ENCODE measurements at regions of chr10 and their contacts with region 1.

Region 1: GRCh38 chr10:75235375-75236177 is at the start of gene COMTD1:
- DNase-seq: peak; percentile 93
- H3K4me3 ChIP-seq: peak within 1 kb of the TSS; percentile 71
- H3K27ac ChIP-seq: no peak within 1 kb of the TSS
- H3K4me1 ChIP-seq: 0 out of 2 replicates have a peak, but pooled peaks cover 6% of the 10 kb centered on the region
- H3K27me3 ChIP-seq: no peaks in the 10 kb centered on the region
- total RNA-seq, gene COMTD1: 12.6 and 38.3 TPM in 2 replicates

Region 2: GRCh38 chr10:73965890-73966768 is 1269.4 kb before region 1 on chr10:
- in situ Hi-C with region 1: no loop called
- DNase-seq: peak; percentile 98
- H3K4me3 ChIP-seq: peak overlapping the region; percentile 28; the same call in 1 of the 2 replicates
- H3K27ac ChIP-seq: peak overlapping the region; percentile 68
- H3K4me1 ChIP-seq: peaks cover 31% of the 10 kb centered on the region
- H3K27me3 ChIP-seq: no peaks in the 10 kb centered on the region

Region 3: DNA sequence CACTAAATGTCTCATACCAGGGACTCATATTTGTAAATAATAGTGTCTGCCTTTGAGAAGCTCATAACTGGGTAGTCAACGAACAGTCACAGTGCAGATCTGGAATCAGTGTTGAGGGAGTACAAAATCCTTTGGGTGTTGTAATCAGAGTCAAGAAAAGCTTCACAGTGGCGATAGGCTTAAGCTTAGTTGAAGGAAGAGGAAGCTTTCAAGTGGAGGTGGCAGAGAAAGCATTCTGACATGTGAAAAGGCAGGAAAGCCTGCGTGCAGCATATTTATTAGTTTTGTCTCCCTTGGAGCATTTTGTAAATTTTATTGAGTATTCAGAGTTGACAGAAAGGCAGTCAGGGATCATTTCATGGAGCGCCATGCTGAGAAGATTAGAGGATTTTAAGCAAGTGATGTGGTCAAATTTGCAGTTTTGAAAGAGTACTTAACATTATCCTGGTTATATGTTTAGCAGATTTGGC is 979.7 kb before region 1 on chr10:
- in situ Hi-C with region 1: loop called (anchors 25 kb)
- DNase-seq: peak; percentile 11
- H3K4me3 ChIP-seq: no peak overlapping the region
- H3K27ac ChIP-seq: no peak overlapping the region
- H3K4me1 ChIP-seq: peaks cover 3% of the 10 kb centered on the region
- H3K27me3 ChIP-seq: no peaks in the 10 kb centered on the region

Region 4: DNA sequence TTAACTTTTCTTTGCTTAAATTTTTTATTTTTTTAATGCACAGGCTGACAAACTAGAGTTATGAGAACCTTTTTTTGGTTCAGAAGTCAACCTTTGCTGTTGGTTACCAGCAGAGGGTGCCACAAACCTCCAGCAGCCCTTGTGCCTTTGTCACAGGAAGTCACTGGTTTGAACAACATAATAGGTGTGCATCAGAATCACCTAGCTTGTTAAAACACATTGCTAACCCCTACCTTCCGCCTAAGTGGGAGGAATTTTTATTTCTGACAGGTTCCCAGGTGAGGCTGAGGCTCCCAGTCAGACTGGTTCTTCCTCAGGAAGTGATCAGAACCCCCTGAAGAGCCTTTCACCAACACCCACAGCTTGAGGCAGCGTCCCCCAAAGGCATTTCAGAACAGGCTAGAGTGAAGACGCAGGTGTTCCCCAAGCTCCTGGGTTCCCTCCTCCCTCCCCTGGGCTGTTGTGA is 47.6 kb before region 1 on chr10:
- in situ Hi-C with region 1: loop called (anchors 5 kb)
- DNase-seq: peak; percentile 77
- H3K4me3 ChIP-seq: no peak overlapping the region
- H3K27ac ChIP-seq: no peak overlapping the region
- H3K4me1 ChIP-seq: peaks cover 14% of the 10 kb centered on the region
- H3K27me3 ChIP-seq: no peaks in the 10 kb centered on the region

Region 5: DNA sequence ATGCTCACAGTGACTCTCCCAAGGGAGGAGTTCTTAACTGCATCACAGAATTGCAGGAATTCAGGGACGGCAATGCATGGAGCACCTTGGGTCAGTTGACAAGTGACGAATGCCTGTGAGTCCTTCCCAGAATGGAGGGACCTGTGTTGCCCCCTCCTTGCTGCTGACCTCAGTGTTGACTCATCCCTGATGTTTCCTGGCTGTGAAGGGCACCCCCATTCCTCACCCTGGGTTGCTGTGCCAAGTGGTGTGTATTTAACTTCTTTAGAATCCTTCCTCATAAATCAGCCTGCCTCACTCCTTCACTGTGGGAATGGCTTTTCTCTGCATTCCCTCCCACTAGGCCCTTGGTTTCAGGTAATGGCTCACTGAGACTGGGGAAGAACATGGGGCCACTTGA is 294.8 kb after region 1 on chr10:
- in situ Hi-C with region 1: no loop called
- DNase-seq: peak; percentile 67
- H3K4me3 ChIP-seq: no peak overlapping the region
- H3K27ac ChIP-seq: no peak overlapping the region
- H3K4me1 ChIP-seq: peaks cover 25% of the 10 kb centered on the region
- H3K27me3 ChIP-seq: no peaks in the 10 kb centered on the region

Measured in GM23248 (cell line).